Calu3 (cell line): ENCODE measurements at regions of chr9 and their contacts with region 1.

Region 1: GRCh38 chr9:133532937-133533668 is 1.4 kb upstream of the ADAMTSL2 start:
- DNase-seq: peak; percentile 81
- H3K4me3 Mint-ChIP-seq: no peak overlapping the region
- H3K27ac Mint-ChIP-seq: no peak overlapping the region
- H3K4me1 Mint-ChIP-seq: no peaks in the 10 kb centered on the region
- H3K27me3 Mint-ChIP-seq: peaks cover 52% of the 10 kb centered on the region
- CTCF ChIP-seq: peak; percentile 61

Region 2: GRCh38 chr9:133726401-133727276 is 193.5 kb after region 1 on chr9:
- CTCF ChIA-PET with region 1: interaction called, 3 read pairs
- intact Hi-C with region 1: loop called (anchors 5 kb)
- DNase-seq: peak; percentile 67
- H3K4me3 Mint-ChIP-seq: no peak overlapping the region
- H3K27ac Mint-ChIP-seq: no peak overlapping the region
- H3K4me1 Mint-ChIP-seq: no peaks in the 10 kb centered on the region
- H3K27me3 Mint-ChIP-seq: peaks cover 83% of the 10 kb centered on the region
- CTCF ChIP-seq: peak; percentile 46